CD8-positive, alpha-beta T cell (primary cell): ENCODE measurements at regions of chr20 and their contacts with region 1.

Region 1: DNA sequence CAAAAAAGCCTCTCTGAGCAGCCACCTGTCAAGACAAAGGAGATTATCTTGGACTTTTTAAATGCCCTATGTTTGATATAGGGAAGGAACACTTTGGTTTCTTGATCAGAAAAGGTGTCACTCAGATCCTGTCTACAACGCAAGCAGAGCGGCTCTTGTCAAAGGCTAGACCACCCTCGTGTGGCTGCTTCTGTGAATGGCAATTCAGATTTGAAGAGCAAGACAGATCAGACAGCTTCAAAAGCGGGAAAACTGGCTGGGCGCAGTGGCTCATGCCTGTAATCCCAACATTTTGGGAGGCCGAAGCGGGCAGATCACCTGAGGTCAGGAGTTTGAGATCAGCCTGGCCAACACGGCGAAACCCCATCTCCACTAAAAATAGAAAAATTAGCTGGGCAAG is 10.1 kb upstream of the NXT1 start:
- DNase-seq: peak in 4 of 9 experiments; percentile 26 to 53 (median 32)
- ATAC-seq: no peak
- H3K4me3 ChIP-seq: no peak overlapping the region
- H3K4me3 Mint-ChIP-seq: no peak overlapping the region
- H3K27ac ChIP-seq: no peak overlapping the region
- H3K27ac Mint-ChIP-seq: no peak overlapping the region
- H3K4me1 ChIP-seq: no peaks in the 10 kb centered on the region
- H3K4me1 Mint-ChIP-seq: no peaks in the 10 kb centered on the region
- H3K27me3 ChIP-seq: no peaks in the 10 kb centered on the region
- H3K27me3 Mint-ChIP-seq: no peaks in the 10 kb centered on the region
- CTCF ChIP-seq: peak; percentile 24

Region 2: GRCh38 chr20:21719592-21720214 is 1620.8 kb before region 1 on chr20:
- CTCF ChIA-PET with region 1: no interaction called
- POLR2A ChIA-PET with region 1: no interaction called
- intact Hi-C with region 1: loop called in 1 of 2 experiments (anchors 5 kb)
- DNase-seq: peak in 6 of 9 experiments; percentile 14 to 30 (median 19)
- ATAC-seq: no peak
- H3K4me3 ChIP-seq: no peak overlapping the region
- H3K4me3 Mint-ChIP-seq: no peak overlapping the region
- H3K27ac ChIP-seq: no peak overlapping the region
- H3K27ac Mint-ChIP-seq: no peak overlapping the region
- H3K4me1 ChIP-seq: no peaks in the 10 kb centered on the region
- H3K4me1 Mint-ChIP-seq: no peaks in the 10 kb centered on the region
- H3K27me3 ChIP-seq: no peaks in the 10 kb centered on the region
- H3K27me3 Mint-ChIP-seq: peaks cover 32% of the 10 kb centered on the region
- CTCF ChIP-seq: peak; percentile 72

Region 3: GRCh38 chr20:22339091-22339881 is 1001.2 kb before region 1 on chr20:
- CTCF ChIA-PET with region 1: no interaction called
- POLR2A ChIA-PET with region 1: no interaction called
- intact Hi-C with region 1: loop called in 1 of 2 experiments (anchors 5 kb)
- DNase-seq: peak in 3 of 9 experiments; percentile 9 to 47 (median 11)
- ATAC-seq: no peak
- H3K4me3 ChIP-seq: no peak overlapping the region
- H3K4me3 Mint-ChIP-seq: no peak overlapping the region
- H3K27ac ChIP-seq: no peak overlapping the region
- H3K27ac Mint-ChIP-seq: no peak overlapping the region
- H3K4me1 ChIP-seq: no peaks in the 10 kb centered on the region
- H3K4me1 Mint-ChIP-seq: peaks cover 1% of the 10 kb centered on the region
- H3K27me3 ChIP-seq: no peaks in the 10 kb centered on the region
- H3K27me3 Mint-ChIP-seq: peaks cover 4% of the 10 kb centered on the region
- CTCF ChIP-seq: peak; percentile 44

Region 4: DNA sequence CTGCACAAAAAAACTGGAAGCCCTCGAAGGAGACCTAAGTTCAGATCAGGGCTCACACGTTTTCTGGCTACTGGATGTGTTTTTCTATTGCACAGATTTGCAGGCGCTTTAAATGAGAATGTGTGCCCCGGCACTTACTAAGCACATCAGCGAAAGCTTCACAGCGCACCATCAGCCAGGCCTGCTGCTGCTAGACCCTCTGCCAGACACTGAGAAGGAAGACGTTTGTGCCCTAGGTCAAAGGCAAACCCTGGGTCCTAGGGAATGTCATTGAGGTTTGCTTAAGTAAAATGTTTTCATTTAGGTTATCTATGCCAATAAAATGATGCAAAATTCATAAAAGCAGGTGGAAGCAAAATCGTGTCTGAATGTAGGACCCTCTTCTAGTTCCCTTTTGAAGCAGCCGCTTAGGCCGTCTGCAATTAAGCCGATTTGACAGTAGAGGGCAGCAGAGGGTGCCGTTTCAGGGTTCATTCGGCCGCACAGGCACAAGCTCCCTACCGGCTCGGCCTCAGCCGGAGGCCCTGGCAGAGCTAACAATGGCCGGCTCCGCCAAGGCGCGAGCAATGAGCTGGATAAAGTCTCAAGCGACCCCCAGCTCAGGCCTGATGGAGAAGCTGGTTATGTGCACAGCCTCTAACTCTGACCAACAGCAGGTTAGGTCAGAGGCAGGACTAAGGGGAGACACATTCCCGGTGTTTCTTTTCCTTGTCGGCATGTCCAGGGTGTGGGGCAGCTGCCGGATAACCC is 649.0 kb before region 1 on chr20:
- CTCF ChIA-PET with region 1: no interaction called
- POLR2A ChIA-PET with region 1: no interaction called
- intact Hi-C with region 1: loop called (anchors 2 to 10 kb)
- DNase-seq: peak in 8 of 9 experiments; percentile 7 to 53 (median 42)
- ATAC-seq: no peak
- H3K4me3 ChIP-seq: no peak overlapping the region
- H3K4me3 Mint-ChIP-seq: no peak overlapping the region
- H3K27ac ChIP-seq: no peak overlapping the region
- H3K27ac Mint-ChIP-seq: no peak overlapping the region
- H3K4me1 ChIP-seq: peaks cover 3% of the 10 kb centered on the region
- H3K4me1 Mint-ChIP-seq: peaks cover 1% of the 10 kb centered on the region
- H3K27me3 ChIP-seq: no peaks in the 10 kb centered on the region
- H3K27me3 Mint-ChIP-seq: peaks cover 3% of the 10 kb centered on the region
- CTCF ChIP-seq: peak; percentile 71

Region 5: DNA sequence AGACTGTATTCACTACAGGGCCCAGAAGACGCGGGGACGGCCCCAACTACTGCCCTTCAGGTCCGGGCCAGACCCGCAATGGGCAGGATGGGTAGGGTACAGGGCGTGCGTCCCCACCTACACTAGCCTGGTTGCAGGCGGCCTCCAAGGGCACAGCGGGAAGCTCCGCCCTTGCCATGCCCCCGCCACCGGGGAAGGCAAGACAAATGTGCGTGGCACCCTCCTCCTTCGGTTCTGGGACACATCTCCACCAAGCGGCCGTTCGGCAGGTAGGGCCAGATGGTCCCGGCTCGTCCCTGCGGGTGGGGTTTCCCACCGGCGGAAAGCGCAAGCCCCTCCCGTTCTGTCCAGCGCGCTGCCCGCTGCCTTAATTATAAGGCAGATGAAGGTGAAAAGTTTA is 15.7 kb after region 1 on chr20:
- CTCF ChIA-PET with region 1: no interaction called
- POLR2A ChIA-PET with region 1: no interaction called
- intact Hi-C with region 1: no loop called
- DNase-seq: no peak
- ATAC-seq: no peak
- H3K4me3 ChIP-seq: no peak overlapping the region
- H3K4me3 Mint-ChIP-seq: no peak overlapping the region
- H3K27ac ChIP-seq: no peak overlapping the region
- H3K27ac Mint-ChIP-seq: no peak overlapping the region
- H3K4me1 ChIP-seq: peaks cover 31% of the 10 kb centered on the region
- H3K4me1 Mint-ChIP-seq: peaks cover 39% of the 10 kb centered on the region
- H3K27me3 ChIP-seq: no peaks in the 10 kb centered on the region
- H3K27me3 Mint-ChIP-seq: no peaks in the 10 kb centered on the region
- CTCF ChIP-seq: no peak

Region 6: DNA sequence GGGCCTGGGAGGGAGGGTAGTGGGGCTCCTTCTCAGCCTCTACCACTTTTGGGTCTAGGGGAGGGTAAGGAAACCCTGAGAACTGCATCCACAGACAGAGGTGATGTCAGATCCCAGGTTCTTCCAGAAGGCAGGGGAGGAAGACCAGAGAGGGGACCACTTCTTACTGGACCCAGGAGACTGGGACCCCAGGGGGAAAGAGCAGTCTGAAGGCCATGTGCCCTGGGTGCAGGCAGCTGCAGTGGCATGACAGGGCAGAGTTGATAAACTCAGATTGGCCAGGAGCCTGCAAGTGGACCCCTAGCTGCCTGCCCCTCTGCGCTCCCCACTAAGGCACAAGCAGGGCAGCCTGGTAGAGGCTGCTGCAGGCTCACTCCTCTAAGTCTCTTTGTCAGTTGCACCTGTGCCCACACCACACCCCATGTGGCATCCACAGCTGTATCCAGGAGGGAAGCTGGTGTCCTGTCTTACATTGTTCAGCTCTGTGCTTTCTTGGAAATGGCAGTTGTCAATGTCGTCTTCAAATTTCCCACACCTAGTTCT is 225.1 kb after region 1 on chr20:
- CTCF ChIA-PET with region 1: no interaction called
- POLR2A ChIA-PET with region 1: no interaction called
- intact Hi-C with region 1: no loop called
- DNase-seq: no peak
- ATAC-seq: no peak
- H3K4me3 ChIP-seq: no peak overlapping the region
- H3K4me3 Mint-ChIP-seq: no peak overlapping the region
- H3K27ac ChIP-seq: no peak overlapping the region
- H3K27ac Mint-ChIP-seq: no peak overlapping the region
- H3K4me1 ChIP-seq: no peaks in the 10 kb centered on the region
- H3K4me1 Mint-ChIP-seq: no peaks in the 10 kb centered on the region
- H3K27me3 ChIP-seq: no peaks in the 10 kb centered on the region
- H3K27me3 Mint-ChIP-seq: peaks cover 13% of the 10 kb centered on the region
- CTCF ChIP-seq: no peak